Common myeloid progenitor, CD34-positive (primary cell): ENCODE measurements at regions of chr12 and their contacts with region 1.

Region 1: GRCh38 chr12:127108360-127109215 is 1158.4 kb upstream of the TMEM132C start:
- DNase-seq: peak; percentile 38 to 68 (median 61)
- H3K4me3 ChIP-seq: no peak overlapping the region
- H3K27ac ChIP-seq: no peak overlapping the region
- H3K4me1 ChIP-seq: no peaks in the 10 kb centered on the region
- H3K27me3 ChIP-seq: peaks cover 0 to 2% (median 0%) of the 10 kb centered on the region in 5 experiments

Region 2: GRCh38 chr12:127060310-127060847 is 48.2 kb before region 1 on chr12:
- CTCF ChIA-PET with region 1: no interaction called
- POLR2A ChIA-PET with region 1: no interaction called
- DNase-seq: no peak
- H3K4me3 ChIP-seq: no peak overlapping the region
- H3K27ac ChIP-seq: peak overlapping the region in 1 of 2 experiments; percentile 51
- H3K4me1 ChIP-seq: no peaks in the 10 kb centered on the region
- H3K27me3 ChIP-seq: no peaks in the 10 kb centered on the region

Region 3: GRCh38 chr12:127070515-127071157 is 38.0 kb before region 1 on chr12:
- CTCF ChIA-PET with region 1: no interaction called
- POLR2A ChIA-PET with region 1: no interaction called
- DNase-seq: no peak
- H3K4me3 ChIP-seq: no peak overlapping the region
- H3K27ac ChIP-seq: no peak overlapping the region
- H3K4me1 ChIP-seq: peaks cover 0 to 6% (median 0%) of the 10 kb centered on the region in 4 experiments
- H3K27me3 ChIP-seq: peaks cover 0 to 2% (median 0%) of the 10 kb centered on the region in 5 experiments

Region 4: GRCh38 chr12:127119600-127120140 is 11.1 kb after region 1 on chr12:
- CTCF ChIA-PET with region 1: interaction called, 16 read pairs
- POLR2A ChIA-PET with region 1: no interaction called
- DNase-seq: no peak
- H3K4me3 ChIP-seq: no peak overlapping the region
- H3K27ac ChIP-seq: no peak overlapping the region
- H3K4me1 ChIP-seq: no peaks in the 10 kb centered on the region
- H3K27me3 ChIP-seq: peaks cover 0 to 2% (median 0%) of the 10 kb centered on the region in 5 experiments

Region 5: GRCh38 chr12:127381048-127381668 is 272.6 kb after region 1 on chr12:
- CTCF ChIA-PET with region 1: interaction called, 11 read pairs
- POLR2A ChIA-PET with region 1: no interaction called
- DNase-seq: peak; percentile 29 to 56 (median 43)
- H3K4me3 ChIP-seq: peak overlapping the region in 3 of 7 experiments; percentile 32 to 62 (median 55)
- H3K27ac ChIP-seq: no peak overlapping the region
- H3K4me1 ChIP-seq: peaks cover 0 to 4% (median under 1%) of the 10 kb centered on the region in 4 experiments
- H3K27me3 ChIP-seq: peaks cover 0 to 5% (median 2%) of the 10 kb centered on the region in 5 experiments

Region 6: GRCh38 chr12:127496255-127496654 is 387.7 kb after region 1 on chr12:
- CTCF ChIA-PET with region 1: no interaction called
- POLR2A ChIA-PET with region 1: no interaction called
- DNase-seq: no peak
- H3K4me3 ChIP-seq: no peak overlapping the region
- H3K27ac ChIP-seq: no peak overlapping the region
- H3K4me1 ChIP-seq: no peaks in the 10 kb centered on the region
- H3K27me3 ChIP-seq: peaks cover 0 to 2% (median 0%) of the 10 kb centered on the region in 5 experiments

Region 7: DNA sequence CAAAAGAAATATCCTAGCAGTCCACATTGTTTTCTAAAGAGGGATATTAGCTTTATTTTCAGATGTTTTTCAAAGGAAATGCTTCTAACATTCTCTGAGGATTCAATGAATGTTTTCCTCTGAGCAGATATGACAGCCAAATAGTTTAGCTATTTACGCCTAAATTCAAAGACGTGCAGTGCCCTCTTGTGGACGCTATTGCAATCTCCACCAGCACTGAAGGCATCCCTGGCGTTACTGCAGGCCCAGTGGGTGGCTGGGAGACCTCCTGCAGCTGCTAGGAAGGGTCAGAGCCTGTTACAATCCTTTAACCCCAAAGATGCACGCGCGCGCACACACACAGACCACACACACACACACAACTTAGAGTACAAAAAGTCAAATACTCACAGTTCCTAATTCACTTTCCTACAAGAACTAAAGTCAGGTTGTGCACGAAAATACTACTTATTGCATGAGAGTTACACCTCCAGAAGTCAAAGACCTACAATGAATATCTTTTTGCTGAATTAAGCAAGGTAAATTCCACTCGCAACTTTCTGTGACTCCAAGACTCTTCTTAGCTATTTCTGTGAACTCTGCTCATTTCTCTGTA is 569.0 kb after region 1 on chr12:
- CTCF ChIA-PET with region 1: interaction called, 22 read pairs
- POLR2A ChIA-PET with region 1: no interaction called
- DNase-seq: peak; percentile 65 to 81 (median 70)
- H3K4me3 ChIP-seq: no peak overlapping the region
- H3K27ac ChIP-seq: no peak overlapping the region
- H3K4me1 ChIP-seq: no peaks in the 10 kb centered on the region
- H3K27me3 ChIP-seq: no peaks in the 10 kb centered on the region